ENCODE measurements at regions of chr15 and their contacts with region 1.

Region 1: GRCh38 chr15:48352474-48353072 is 21.3 kb downstream of the DUT start:
- DNase-seq: no peak
- H3K4me3 ChIP-seq: no peak overlapping the region
- CTCF ChIP-seq: no peak
- POLR2A ChIP-seq: no peak

Region 2: DNA sequence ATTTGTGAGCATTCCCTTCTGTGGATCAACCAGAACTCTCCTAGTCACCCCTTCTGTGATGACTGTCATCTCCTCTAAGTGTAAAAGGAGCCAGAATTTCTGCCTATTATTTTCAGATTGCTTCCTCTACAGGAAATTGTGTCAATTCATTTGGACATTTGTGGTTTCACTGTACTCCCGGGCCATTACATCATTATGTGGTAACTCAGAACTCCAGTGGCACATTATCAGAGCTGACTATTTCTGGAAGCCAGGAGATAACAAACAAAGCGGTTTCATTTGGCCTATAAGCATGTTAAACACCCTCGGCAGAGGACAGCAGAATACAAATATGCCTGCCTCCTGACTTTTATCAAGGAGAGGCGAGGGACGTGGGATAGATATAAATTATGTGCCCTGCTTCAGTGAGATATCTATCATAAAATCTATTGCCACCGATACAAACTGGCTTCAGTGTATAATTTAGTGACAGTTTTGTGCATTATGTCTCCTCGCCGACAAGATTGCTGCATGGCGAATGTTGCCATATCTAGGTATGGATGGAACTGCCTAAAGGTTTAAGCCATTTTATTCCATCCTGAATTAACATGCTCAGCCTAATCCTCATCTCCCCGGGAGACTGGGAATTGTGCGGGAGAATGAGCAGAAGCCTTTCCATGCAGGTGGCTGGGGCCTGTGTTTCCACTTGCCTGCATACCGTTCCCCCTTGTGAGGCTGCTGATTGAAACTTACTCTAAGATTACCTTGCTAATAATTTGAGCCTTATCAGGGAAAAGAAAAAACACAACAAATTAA is 828.7 kb before region 1 on chr15:
- intact Hi-C with region 1: no loop called
- DNase-seq: no peak
- H3K4me3 ChIP-seq: no peak overlapping the region
- CTCF ChIP-seq: no peak
- POLR2A ChIP-seq: no peak

Region 3: DNA sequence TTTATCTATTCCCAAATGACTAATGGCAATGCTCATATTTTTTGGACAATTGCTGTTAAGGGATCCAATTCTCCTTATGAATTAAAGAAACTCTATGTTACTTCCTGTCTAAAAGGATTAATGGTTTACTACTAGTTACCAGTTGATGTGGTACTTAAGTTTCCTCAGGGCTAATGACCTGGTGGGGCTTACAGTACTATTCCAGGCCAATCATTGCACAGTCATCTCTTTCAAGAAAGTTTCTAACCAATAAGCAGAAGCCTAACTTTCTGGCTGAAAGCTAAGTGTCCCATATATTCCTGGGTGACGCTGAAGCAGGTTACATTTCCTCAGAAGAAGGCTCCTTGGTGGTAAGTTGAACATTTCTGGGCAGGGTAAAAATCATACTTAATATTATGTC is 146.6 kb before region 1 on chr15 and contains the start of gene SLC12A1:
- intact Hi-C with region 1: no loop called
- DNase-seq: no peak
- H3K4me3 ChIP-seq: no peak within 1 kb of the TSS
- CTCF ChIP-seq: no peak
- POLR2A ChIP-seq: no peak
- total RNA-seq, gene SLC12A1: not detected

Region 4: DNA sequence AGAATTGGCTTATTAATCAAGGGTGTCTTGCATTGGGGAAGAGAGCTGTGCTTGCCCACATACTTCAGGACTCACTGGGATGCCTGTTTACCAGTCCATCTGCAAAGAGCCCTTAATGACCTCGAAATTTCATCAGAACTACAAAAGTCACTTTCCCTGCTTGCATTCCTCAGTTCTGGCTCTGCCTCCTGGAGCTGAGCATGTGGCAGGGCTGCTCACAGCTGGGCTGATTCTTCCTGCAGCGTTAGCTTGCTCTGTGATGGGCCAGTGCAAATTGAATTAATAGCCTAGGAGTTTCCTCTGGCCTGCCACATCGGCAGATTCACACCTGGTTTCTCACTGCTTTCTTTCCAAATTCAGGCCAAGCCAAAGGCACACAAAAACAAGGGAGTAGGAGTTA is 87.5 kb after region 1 on chr15:
- intact Hi-C with region 1: no loop called
- DNase-seq: peak in 1 of 2 donors; percentile 38
- H3K4me3 ChIP-seq: no peak overlapping the region
- CTCF ChIP-seq: no peak
- POLR2A ChIP-seq: no peak

Region 5: DNA sequence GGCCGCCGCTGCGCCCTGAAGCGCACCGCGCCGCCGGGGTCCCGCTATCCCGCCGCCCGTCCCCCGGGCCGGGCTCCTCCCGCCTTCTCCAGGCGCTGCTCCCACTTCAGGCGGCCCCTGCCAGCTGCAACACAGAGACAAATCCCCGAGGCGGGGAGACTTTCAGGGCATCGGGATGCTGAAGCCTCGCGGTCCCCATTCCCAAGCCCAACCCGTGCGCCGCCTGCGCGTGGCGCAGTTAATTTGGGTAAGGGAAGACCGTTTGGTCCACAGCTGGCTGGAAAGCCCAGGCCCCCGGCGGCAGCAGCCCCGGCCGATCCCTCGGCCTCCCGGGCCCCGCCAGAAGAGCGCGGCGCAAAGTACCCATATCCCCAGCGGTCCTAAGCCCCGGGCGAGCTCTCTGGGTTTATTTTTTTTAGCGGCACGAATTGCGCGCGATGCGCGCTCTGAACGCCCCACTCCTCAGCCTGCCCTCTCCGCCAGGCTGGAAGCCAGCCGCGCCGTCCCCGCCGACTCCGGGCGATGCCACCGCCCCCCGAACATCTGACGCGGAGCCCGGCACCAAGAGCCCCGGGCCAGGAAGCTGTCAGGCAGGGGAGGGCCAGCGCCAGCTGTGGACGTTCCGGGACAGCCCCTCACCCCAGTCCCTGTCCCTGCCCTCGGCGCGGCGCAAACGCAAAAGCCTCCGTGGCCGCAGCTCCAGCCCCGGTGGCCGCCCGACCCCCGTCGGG is 292.4 kb after region 1 on chr15:
- intact Hi-C with region 1: no loop called
- DNase-seq: peak in 1 of 2 donors; percentile 90
- H3K4me3 ChIP-seq: peak overlapping the region; percentile 51
- CTCF ChIP-seq: no peak
- POLR2A ChIP-seq: no peak

Region 6: DNA sequence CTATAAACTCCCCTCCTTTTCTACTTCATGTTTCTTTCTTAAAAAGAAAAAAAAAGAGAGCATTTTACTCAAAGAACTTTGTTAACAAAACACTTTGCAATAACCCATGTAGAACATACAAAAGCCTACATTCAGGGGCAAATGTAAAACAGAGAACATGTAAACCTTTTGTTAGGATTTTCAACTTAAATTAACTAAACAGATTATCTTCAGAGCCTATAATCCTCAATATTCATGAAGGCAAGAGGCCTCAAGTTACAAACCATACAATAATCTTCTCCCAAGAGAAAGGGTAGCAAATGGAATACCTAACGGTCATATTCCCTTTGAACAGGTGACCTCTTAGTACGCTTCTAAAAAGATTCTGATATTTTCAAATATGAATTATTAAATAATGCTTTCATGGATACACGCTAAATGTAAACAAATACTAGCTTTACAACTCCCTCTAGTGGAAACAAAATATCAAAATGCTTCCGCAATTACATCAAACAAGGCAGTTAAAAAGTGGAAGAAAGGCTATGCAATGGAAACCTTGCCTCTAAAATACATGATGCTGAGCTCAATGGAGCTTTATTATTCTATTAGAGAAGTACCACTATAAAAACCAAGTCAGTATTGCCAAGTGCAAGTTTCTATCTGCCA is 448.4 kb after region 1 on chr15:
- intact Hi-C with region 1: loop called (anchors 10 kb)
- DNase-seq: no peak
- H3K4me3 ChIP-seq: no peak overlapping the region
- CTCF ChIP-seq: no peak
- POLR2A ChIP-seq: no peak